ENCODE measurements at regions of chr5 and their contacts with region 1.

Region 1: DNA sequence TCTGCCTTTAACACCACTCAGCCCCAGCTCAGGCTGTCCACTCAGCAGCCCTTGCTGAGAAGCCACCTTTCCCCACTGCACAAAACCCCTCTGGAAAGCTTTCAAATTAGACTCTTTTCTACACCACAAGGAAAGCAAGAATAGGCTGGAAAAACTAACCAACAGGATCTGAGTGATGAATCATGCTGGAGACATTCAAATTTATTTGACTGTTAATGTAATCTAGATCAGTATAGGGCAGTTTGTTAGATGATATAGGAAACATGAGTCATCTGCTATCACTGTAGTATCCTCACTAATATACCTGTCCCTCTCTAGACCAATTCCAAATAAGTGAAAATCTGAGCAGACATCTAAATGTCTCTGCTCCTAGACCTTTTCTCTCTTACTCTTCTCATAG is 127.8 kb upstream of the PAM start:
- DNase-seq: peak; percentile 94
- ATAC-seq: peak; percentile 84
- H3K4me3 ChIP-seq: peak overlapping the region; percentile 8; the same call in 1 of the 2 replicates
- H3K27ac ChIP-seq: peak overlapping the region; percentile 49
- H3K4me1 ChIP-seq: peaks cover 65% of the 10 kb centered on the region
- H3K27me3 ChIP-seq: no peaks in the 10 kb centered on the region
- CTCF ChIP-seq: no peak

Region 2: GRCh38 chr5:102596113-102596512 is 31.2 kb before region 1 on chr5:
- CTCF ChIA-PET with region 1: no interaction called
- POLR2A ChIA-PET with region 1: no interaction called
- intact Hi-C with region 1: loop called (anchors 2 kb)
- DNase-seq: no peak
- ATAC-seq: no peak
- H3K4me3 ChIP-seq: no peak overlapping the region
- H3K27ac ChIP-seq: no peak overlapping the region
- H3K4me1 ChIP-seq: peaks cover 23% of the 10 kb centered on the region
- H3K27me3 ChIP-seq: no peaks in the 10 kb centered on the region
- CTCF ChIP-seq: no peak

Region 3: DNA sequence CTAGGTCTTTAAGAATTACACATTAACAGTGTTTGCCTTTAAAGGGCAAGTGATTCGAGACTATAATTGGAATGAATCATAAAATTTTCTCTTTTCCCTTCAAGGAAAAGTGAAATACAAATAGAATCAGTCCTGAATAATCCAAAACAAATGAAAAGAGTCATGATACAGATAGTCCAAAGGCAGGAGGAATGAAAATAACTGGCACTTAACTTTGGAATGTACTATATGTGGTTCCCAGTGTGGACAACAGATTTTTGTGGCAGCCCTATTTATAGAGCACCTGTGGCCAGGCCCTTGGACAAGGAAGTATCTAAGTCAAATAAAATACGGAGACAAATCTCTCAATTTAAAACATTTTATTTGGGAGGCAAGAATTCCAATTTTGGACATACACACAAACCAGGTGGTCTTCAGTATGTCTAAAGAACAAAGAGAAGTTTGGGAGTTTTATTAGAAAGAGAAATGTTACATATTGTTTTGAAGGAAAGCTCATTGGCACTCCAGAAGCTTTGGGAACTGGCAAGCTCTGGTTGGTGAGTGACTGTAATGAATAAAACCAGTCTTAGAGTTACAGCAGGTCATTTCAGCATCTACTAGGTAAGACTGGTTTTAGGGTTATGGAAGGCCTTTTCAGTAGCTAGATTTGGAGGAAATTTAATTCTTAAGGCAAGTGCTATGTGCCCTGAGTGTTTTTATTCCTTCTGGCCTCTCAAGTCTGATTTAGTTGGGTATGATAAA is 11.8 kb after region 1 on chr5:
- CTCF ChIA-PET with region 1: no interaction called
- POLR2A ChIA-PET with region 1: interaction called, 16 read pairs
- intact Hi-C with region 1: no loop called
- DNase-seq: peak; percentile 87
- ATAC-seq: peak; percentile 91
- H3K4me3 ChIP-seq: peak overlapping the region; percentile 3; the same call in 1 of the 2 replicates
- H3K27ac ChIP-seq: peak overlapping the region; percentile 81
- H3K4me1 ChIP-seq: peaks cover 24% of the 10 kb centered on the region
- H3K27me3 ChIP-seq: no peaks in the 10 kb centered on the region
- CTCF ChIP-seq: no peak

Region 4: GRCh38 chr5:102715082-102715819 is 87.9 kb after region 1 on chr5:
- CTCF ChIA-PET with region 1: interaction called, 5 read pairs
- POLR2A ChIA-PET with region 1: no interaction called
- intact Hi-C with region 1: loop called (anchors 2 kb)
- DNase-seq: peak; percentile 84
- ATAC-seq: peak; percentile 42
- H3K4me3 ChIP-seq: no peak overlapping the region
- H3K27ac ChIP-seq: no peak overlapping the region
- H3K4me1 ChIP-seq: peaks cover 39% of the 10 kb centered on the region
- H3K27me3 ChIP-seq: no peaks in the 10 kb centered on the region
- CTCF ChIP-seq: no peak